Transverse colon (tissue), 4 donors: ENCODE measurements at regions of chr20 and their contacts with region 1.

Region 1: GRCh38 chr20:438571-439469 is 23.5 kb downstream of the TBC1D20 start:
- DNase-seq: peak; percentile 41
- H3K4me3 ChIP-seq: no peak overlapping the region
- H3K27ac ChIP-seq: peak overlapping the region in 1 of 4 donors; percentile 11
- H3K4me1 ChIP-seq: peaks cover 0 to 26% (median 9%) of the 10 kb centered on the region in 4 donors
- H3K27me3 ChIP-seq: no peaks in the 10 kb centered on the region
- CTCF ChIP-seq: no peak
- EP300 ChIP-seq: no peak
- POLR2A ChIP-seq: no peak

Region 2: DNA sequence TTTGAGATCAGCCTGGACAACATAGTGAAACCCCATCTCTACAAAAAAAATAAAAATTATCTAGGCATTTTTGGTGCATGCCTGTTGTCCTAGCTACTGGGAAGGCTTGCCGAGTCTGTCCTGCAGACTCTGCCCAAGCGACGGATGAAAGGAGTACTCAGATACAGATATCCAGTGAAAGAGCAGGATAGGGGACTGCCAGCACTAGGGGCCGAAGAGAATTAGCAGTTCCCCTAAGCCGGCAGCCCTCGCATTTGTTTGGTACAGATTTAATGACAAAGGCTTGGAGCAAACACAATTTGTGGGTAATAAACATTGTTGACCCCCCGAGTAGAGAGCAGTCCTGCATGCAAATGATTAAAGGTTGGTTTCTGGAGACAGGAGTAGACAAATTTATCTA is 28.9 kb after region 1 on chr20:
- in situ Hi-C with region 1: no loop called
- intact Hi-C with region 1: loop called (anchors 1 kb)
- DNase-seq: no peak
- H3K4me3 ChIP-seq: no peak overlapping the region
- H3K27ac ChIP-seq: no peak overlapping the region
- H3K4me1 ChIP-seq: peaks cover 0 to 7% (median 5%) of the 10 kb centered on the region in 4 donors
- H3K27me3 ChIP-seq: peaks cover 4% of the 10 kb centered on the region
- CTCF ChIP-seq: no peak
- EP300 ChIP-seq: no peak
- POLR2A ChIP-seq: no peak